ENCODE measurements at regions of chr2 and their contacts with region 1.

Region 1: DNA sequence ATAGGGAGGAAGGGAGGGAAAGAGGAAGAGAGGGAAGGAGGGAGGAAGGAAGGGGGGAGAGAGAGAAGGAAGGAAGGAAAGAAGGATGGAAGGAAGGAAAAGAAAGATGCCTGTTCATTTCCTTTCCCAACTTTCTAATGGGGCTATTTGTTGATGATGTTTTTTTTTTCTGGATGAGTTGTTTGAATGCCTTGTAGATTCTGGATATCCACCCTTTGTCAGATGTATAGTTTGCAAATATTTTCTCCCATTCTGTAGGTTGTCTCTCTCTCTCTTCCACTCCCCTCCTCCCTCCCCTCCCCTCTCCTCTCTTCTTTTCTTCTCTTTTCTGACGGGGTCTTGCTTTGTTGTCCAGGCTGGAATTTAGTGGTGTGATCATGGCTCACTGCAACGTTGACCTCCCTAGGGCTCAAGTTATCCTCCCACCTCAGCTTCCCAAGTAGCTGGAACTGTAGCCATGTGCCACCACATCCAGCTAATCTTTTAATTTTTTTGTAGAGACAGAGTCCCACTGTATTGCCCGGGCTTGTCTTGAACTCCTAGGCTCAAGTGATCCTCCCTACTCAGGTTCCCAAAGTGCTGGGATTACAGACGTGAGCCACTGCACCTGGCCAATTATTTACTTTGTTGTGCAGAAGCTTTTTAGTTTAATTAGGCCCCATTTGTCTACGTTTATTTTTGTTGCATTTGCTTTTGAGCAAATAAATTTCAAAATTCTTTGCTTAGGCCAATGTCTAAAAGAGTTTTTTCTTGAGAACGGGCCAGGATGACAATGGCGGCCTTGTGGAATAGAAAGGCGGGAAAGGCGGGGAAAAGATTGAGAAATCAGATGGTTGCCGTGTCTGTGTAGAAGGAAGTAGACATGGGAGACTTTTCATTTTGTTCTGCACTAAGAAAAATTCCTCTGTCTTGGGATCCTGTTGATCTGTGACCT is 57.3 kb upstream of the FAM117B start:
- DNase-seq: no peak
- H3K4me3 Mint-ChIP-seq: no peak overlapping the region
- H3K27ac Mint-ChIP-seq: no peak overlapping the region
- H3K4me1 Mint-ChIP-seq: peaks cover under 1% of the 10 kb centered on the region
- H3K27me3 Mint-ChIP-seq: no peaks in the 10 kb centered on the region

Region 2: DNA sequence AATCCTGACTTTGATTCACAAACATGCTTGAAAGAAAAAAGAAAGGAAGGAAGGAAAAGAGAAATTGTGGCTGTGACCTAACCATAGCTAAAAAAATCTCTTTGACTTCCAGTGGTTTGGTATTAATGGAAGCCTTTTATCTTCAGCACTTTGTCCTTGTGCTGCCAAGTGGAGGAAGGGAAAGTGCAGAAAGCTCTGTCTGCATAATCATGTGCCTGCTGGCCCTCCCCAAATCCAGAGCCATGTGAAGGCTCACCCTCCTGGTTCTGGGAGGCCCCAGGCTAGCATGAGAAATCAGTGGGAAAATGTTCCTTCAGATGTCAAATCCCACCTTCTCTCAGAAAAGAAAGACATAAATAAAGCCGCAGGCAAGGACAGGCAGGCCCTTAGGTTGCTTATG is 249.7 kb before region 1 on chr2:
- intact Hi-C with region 1: no loop called
- DNase-seq: no peak
- H3K4me3 Mint-ChIP-seq: no peak overlapping the region
- H3K27ac Mint-ChIP-seq: no peak overlapping the region
- H3K4me1 Mint-ChIP-seq: no peaks in the 10 kb centered on the region
- H3K27me3 Mint-ChIP-seq: no peaks in the 10 kb centered on the region

Region 3: GRCh38 chr2:202703091-202703490 is 125.6 kb after region 1 on chr2:
- intact Hi-C with region 1: no loop called
- DNase-seq: no peak
- H3K4me3 Mint-ChIP-seq: no peak overlapping the region
- H3K27ac Mint-ChIP-seq: peak overlapping the region; percentile 36
- H3K4me1 Mint-ChIP-seq: peaks cover 48% of the 10 kb centered on the region
- H3K27me3 Mint-ChIP-seq: no peaks in the 10 kb centered on the region

Region 4: DNA sequence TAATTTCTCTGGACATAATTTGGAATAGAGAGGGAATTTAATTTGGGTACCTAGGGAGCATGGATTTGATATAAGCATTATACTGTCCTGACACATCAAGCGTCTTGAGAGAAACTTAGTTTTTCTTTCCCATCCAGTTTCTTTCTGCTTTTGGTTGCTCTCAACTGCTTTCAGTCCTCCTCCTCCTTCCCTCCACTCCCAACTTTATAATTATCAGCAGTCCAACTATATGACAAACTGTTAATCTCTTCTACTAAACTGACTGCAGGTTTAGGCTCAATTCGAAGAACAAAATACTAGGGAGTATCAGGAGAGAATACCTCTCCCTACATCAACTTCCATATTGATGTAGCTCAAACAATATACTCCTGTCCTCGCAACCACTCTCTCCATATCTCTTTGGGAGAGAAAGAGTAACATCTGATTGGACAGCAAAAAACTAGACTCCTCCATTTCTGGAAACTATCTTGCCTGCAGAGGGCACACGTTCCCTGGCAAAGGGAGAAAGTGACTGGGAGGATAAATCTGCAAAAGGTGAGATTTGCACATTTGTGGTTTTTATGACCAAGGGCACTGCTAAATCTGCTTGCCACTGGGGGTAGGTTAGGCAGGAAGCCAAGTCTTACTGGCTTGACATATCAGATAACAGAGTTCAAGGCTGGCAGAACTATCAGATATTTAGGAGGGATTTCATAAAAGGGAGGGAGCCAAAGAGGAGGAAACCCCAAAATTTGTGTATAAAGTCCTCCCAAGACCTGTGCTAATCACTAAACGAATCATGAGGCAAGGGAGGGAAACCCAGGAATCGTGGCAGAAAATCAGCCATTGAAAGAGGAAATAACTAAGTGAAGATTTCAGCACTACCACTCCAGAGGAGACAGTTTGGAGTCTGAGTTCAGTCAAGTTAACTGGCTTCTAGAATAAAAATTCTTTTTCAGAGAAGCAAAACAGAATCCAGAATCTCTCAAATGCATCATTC is 254.0 kb after region 1 on chr2:
- intact Hi-C with region 1: loop called (anchors 5 kb)
- DNase-seq: peak; percentile 11
- H3K4me3 Mint-ChIP-seq: no peak overlapping the region
- H3K27ac Mint-ChIP-seq: no peak overlapping the region
- H3K4me1 Mint-ChIP-seq: peaks cover 10% of the 10 kb centered on the region
- H3K27me3 Mint-ChIP-seq: peaks cover 3% of the 10 kb centered on the region

Region 5: DNA sequence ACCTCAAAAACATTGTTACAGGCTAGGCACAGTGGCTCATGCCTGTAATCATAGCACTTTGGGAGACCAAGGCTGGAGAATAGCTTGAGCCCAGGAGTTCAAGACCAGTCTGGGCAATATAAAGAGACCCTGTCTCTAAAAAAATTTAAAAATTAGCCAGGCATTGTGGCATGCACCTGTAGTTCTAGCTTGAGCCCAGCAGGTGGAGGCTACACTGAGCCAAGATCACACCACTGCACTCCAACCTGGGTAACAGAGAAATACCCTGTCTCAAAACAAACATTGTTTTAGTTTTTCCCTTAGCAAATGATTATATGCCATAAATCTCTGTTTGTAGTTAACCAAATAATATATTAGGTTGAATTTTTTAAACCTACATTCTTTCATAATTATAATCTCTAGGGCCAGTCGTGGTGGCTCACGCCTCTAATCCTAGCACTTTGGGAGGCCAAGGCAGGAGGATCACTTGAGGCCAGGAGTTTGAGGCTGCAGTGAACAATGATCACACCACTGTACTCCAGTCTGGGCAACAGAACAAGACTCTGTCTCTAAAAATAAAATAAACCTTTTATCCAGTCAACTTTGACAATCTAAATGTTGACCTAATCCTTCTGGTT is 648.0 kb after region 1 on chr2:
- intact Hi-C with region 1: loop called (anchors 2 kb)
- DNase-seq: no peak
- H3K4me3 Mint-ChIP-seq: no peak overlapping the region
- H3K27ac Mint-ChIP-seq: no peak overlapping the region
- H3K4me1 Mint-ChIP-seq: no peaks in the 10 kb centered on the region
- H3K27me3 Mint-ChIP-seq: peaks cover 2% of the 10 kb centered on the region